ENCODE measurements at regions of chr3 and their contacts with region 1.

Region 1: GRCh38 chr3:48918388-48919214 is at the start of gene ARIH2:
- DNase-seq: peak; percentile 92 to 95 (median 95)
- H3K4me3 ChIP-seq: peak within 1 kb of the TSS; percentile 49 to 87 (median 85)
- H3K4me3 Mint-ChIP-seq: peak within 1 kb of the TSS; percentile 92 to 97
- H3K27ac ChIP-seq: peak within 1 kb of the TSS; percentile 94 to 99
- H3K27ac Mint-ChIP-seq: peak within 1 kb of the TSS; percentile 99
- H3K4me1 ChIP-seq: peaks cover 23 to 32% of the 10 kb centered on the region in 2 donors
- H3K4me1 Mint-ChIP-seq: peaks cover 18% of the 10 kb centered on the region
- H3K27me3 ChIP-seq: no peaks in the 10 kb centered on the region
- H3K27me3 Mint-ChIP-seq: peaks cover 0 to 3% (median 2%) of the 10 kb centered on the region in 3 donors
- CTCF ChIP-seq: peak; percentile 17
- polyA plus RNA-seq, gene ARIH2: 68.2 to 94.8 (median 72.2) TPM

Region 2: DNA sequence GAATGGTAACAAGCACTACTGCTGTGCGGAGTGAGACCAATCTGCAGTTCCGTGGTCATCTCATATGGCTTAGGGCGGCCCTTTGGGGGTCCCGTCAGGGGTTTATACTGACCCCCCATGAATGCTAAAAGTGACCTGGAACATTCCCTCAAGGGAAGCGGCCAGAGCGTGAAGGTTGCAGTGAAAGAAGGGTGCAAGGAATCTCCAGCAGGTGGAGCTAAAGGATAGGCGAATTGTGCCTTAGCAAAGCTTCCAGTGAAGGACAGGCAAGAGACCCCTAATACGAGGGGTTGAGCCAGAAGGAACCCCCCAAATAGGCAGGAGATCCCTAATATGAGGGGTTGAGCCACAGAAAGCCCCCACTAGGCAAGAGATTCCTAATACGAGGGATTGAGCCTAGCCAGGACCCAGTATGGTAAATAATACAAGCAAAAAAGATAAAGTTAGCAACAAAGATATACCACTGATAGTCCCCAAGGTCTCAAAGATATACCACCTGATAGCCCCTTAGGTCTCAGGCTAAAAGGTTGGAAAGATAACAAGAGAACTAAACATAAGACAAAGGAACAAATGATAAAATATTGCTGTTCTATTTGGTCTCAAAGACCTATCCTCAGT is 644.9 kb before region 1 on chr3:
- intact Hi-C with region 1: no loop called
- DNase-seq: peak; percentile 45 to 67 (median 62)
- H3K4me3 ChIP-seq: no peak overlapping the region
- H3K4me3 Mint-ChIP-seq: no peak overlapping the region
- H3K27ac ChIP-seq: no peak overlapping the region
- H3K27ac Mint-ChIP-seq: no peak overlapping the region
- H3K4me1 ChIP-seq: no peaks in the 10 kb centered on the region
- H3K4me1 Mint-ChIP-seq: peaks cover 11% of the 10 kb centered on the region
- H3K27me3 ChIP-seq: no peaks in the 10 kb centered on the region
- H3K27me3 Mint-ChIP-seq: peaks cover 0 to 4% (median 1%) of the 10 kb centered on the region in 3 donors
- CTCF ChIP-seq: peak; percentile 82

Region 3: DNA sequence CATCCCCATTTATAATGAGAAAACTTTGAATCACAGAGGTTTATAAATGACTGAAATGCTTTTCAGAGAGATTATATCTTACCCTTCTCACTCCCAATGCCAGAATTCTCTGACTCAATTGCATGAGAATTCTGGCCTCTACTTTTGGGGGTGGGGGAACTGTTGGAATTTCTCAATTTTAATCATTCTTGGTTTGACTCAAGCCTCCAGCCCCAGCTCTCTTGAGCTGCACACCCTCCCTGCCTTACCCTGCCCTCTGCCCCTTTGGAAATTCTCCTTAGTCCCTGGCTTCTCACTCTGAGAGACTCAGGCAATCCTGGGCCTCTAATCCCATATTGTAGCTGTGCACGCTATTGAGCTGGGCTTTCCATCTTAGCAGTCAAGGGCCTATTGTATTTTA is 633.5 kb before region 1 on chr3:
- intact Hi-C with region 1: no loop called
- DNase-seq: no peak
- H3K4me3 ChIP-seq: no peak overlapping the region
- H3K4me3 Mint-ChIP-seq: no peak overlapping the region
- H3K27ac ChIP-seq: no peak overlapping the region
- H3K27ac Mint-ChIP-seq: no peak overlapping the region
- H3K4me1 ChIP-seq: no peaks in the 10 kb centered on the region
- H3K4me1 Mint-ChIP-seq: peaks cover 2% of the 10 kb centered on the region
- H3K27me3 ChIP-seq: no peaks in the 10 kb centered on the region
- H3K27me3 Mint-ChIP-seq: peaks cover 0 to 2% (median 0%) of the 10 kb centered on the region in 3 donors
- CTCF ChIP-seq: no peak

Region 4: DNA sequence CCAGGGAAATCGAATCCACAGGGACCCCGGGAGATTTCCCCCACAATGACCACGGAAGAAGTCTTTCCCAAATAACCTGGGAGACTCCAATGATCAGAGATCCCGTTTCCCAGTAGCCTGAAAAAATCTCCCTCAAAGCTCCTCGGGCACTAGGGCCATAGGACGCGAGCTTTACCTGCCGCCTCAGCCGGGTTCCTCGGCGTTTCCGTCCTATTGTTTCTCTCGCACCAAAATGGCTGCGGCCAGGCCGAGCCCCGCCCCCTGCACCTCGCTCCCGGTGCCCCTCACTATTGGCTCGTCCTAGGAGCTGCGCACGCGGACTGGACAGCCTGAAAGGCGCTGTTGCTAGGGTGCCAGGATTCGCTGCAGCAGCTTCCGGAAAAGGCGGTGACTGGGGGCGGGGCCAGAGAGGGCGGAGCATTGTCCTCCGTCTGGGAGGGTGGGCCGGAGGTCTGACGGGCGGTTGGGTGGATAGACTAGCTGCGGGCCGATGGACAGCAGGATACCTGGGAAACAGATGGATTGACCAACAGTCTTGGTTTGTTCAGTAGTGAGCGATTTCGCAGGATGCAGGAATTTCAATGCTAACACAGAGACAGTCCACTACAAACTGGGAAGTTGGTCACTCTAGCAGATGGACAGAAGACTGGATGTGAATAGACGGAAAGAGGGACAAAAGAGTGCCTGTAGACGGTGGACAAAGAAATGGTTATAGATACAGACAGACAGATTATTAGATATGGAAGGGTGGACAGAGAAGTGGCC is 201.4 kb before region 1 on chr3 and contains the start of gene IP6K2:
- intact Hi-C with region 1: loop called in 1 of 2 experiments (anchors 10 kb)
- DNase-seq: peak; percentile 95 to 99 (median 96)
- H3K4me3 ChIP-seq: peak within 1 kb of the TSS; percentile 87 to 99 (median 91)
- H3K4me3 Mint-ChIP-seq: peak within 1 kb of the TSS; percentile 99
- H3K27ac ChIP-seq: peak within 1 kb of the TSS; percentile 67 to 92
- H3K27ac Mint-ChIP-seq: peak within 1 kb of the TSS; percentile 95 to 99 (median 97)
- H3K4me1 ChIP-seq: peaks cover 10 to 29% of the 10 kb centered on the region in 2 donors
- H3K4me1 Mint-ChIP-seq: peaks cover 25% of the 10 kb centered on the region
- H3K27me3 ChIP-seq: no peaks in the 10 kb centered on the region
- H3K27me3 Mint-ChIP-seq: peaks cover 5 to 9% (median 6%) of the 10 kb centered on the region in 3 donors
- CTCF ChIP-seq: no peak
- polyA plus RNA-seq, gene IP6K2: 16.5 to 53.8 (median 18.7) TPM

Region 5: GRCh38 chr3:48847504-48848423 is 70.8 kb before region 1 on chr3 and contains the start of gene PRKAR2A:
- intact Hi-C with region 1: loop called (anchors 5 to 10 kb)
- DNase-seq: peak; percentile 86 to 91 (median 88)
- H3K4me3 ChIP-seq: peak within 1 kb of the TSS; percentile 84 to 94 (median 89)
- H3K4me3 Mint-ChIP-seq: peak within 1 kb of the TSS; percentile 88 to 93
- H3K27ac ChIP-seq: peak within 1 kb of the TSS; percentile 87 to 89
- H3K27ac Mint-ChIP-seq: peak within 1 kb of the TSS; percentile 88 to 98 (median 96)
- H3K4me1 ChIP-seq: peaks cover 21 to 27% of the 10 kb centered on the region in 2 donors
- H3K4me1 Mint-ChIP-seq: peaks cover 29% of the 10 kb centered on the region
- H3K27me3 ChIP-seq: no peaks in the 10 kb centered on the region
- H3K27me3 Mint-ChIP-seq: peaks cover 0 to 2% (median 1%) of the 10 kb centered on the region in 3 donors
- CTCF ChIP-seq: no peak
- polyA plus RNA-seq, gene PRKAR2A: 7.5 to 13.0 (median 12.3) TPM

Region 6: GRCh38 chr3:48938156-48938555 is 19.6 kb after region 1 on chr3:
- intact Hi-C with region 1: no loop called
- DNase-seq: no peak
- H3K4me3 ChIP-seq: no peak overlapping the region
- H3K4me3 Mint-ChIP-seq: no peak overlapping the region
- H3K27ac ChIP-seq: no peak overlapping the region
- H3K27ac Mint-ChIP-seq: peak overlapping the region in 1 of 7 donors; percentile 23
- H3K4me1 ChIP-seq: peaks cover 7 to 11% of the 10 kb centered on the region in 2 donors
- H3K4me1 Mint-ChIP-seq: peaks cover 18% of the 10 kb centered on the region
- H3K27me3 ChIP-seq: no peaks in the 10 kb centered on the region
- H3K27me3 Mint-ChIP-seq: peaks cover 0 to 3% (median 0%) of the 10 kb centered on the region in 3 donors
- CTCF ChIP-seq: no peak